Motor neuron (in vitro differentiated cells): ENCODE measurements at regions of chr4 and their contacts with region 1.

Region 1: DNA sequence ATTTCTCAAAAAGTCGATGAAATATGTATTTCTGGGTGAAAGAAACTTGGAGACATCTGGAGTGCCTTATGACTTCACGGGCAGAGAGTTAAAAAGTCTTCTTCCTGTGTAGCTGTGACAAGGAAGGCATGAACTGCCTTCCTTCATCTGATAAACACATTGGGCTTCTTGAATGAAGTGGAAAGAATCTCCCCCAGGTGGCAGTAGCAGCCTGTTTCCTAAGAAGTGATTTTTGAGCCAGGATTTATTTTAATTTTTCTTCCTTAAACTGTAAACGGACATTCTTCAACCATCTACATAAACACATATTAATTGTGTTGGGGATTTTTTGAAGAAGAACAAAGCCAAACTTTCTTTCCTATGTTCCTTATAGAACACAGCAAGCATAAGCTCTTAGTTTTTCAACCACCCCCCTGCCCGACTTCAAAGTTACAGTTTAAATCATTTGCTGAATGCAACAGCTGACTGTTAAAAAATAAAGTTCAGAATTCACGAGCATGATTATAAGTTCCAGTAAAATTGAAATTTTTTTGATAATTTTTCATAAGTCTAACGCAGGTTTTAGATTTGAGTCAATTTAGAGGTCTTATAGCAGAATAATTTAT is 980 bp upstream of the GIMD1 start:
- ATAC-seq: peak in 4 of 8 experiments; percentile 18 to 80 (median 39)
- H3K4me3 ChIP-seq: no peak overlapping the region
- H3K27ac ChIP-seq: no peak overlapping the region
- H3K4me1 ChIP-seq: no peaks in the 10 kb centered on the region

Region 2: DNA sequence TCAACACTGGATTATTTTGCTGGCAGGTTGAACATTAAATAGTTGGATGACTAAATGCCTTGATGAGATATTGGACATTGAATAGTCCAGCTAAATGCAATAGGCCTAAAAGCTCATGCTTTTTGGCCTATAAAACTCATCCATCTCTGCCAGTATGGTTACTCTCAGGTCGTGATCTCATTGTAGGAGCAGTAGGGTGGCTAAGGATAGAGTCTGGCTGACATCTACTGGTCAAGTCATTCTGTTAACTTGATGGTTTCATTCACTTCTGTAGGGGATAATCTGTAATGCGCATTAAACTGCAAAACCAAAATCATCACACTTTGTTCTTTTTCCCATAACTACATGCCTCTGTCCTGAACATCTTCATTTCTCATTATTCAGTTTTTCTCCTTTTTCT is 439.5 kb after region 1 on chr4:
- in situ Hi-C with region 1: loop called in 2 of 9 experiments (anchors 25 kb)
- ATAC-seq: peak in 3 of 8 experiments; percentile 94 to 100 (median 100)
- H3K4me3 ChIP-seq: no peak overlapping the region
- H3K27ac ChIP-seq: no peak overlapping the region
- H3K4me1 ChIP-seq: no peaks in the 10 kb centered on the region

Region 3: DNA sequence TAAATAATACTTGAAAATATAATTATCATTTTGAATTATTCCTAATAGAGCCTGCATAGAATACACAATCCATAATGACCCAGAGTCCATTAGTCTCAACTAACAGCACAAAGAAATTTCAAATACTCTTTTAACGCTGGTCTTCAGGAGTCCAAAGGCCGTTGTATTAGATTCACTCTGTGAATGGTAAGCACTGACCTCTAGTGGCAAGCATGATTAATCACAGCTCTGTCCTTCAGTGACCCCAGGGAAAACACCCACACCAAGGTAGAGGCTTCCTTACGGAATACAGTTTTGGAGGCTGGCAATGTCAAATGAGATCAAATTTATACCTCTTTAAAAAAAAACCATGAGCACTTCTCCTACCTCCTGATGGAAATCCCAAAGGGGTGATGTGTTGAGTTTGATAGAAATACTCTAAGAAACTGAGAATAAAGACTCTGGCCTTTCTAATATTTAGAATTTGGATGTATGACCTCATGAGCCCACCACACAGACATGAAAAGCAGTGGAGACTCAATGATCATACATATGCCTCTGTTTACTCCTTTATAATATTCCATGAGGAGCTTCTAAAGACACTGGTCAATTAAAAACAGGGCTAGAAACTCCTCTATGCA is 813.7 kb after region 1 on chr4:
- in situ Hi-C with region 1: loop called in 2 of 9 experiments (anchors 25 kb)
- ATAC-seq: peak; percentile 64 to 96 (median 80)
- H3K4me3 ChIP-seq: no peak overlapping the region
- H3K27ac ChIP-seq: no peak overlapping the region
- H3K4me1 ChIP-seq: no peaks in the 10 kb centered on the region